ENCODE measurements at regions of chr18 and their contacts with region 1.

Region 1: GRCh38 chr18:29874519-29875098 is 1167.9 kb downstream of the DSC3 start:
- DNase-seq: no peak
- ATAC-seq: no peak
- H3K4me3 ChIP-seq: no peak overlapping the region
- H3K27ac ChIP-seq: no peak overlapping the region
- H3K4me1 ChIP-seq: no peaks in the 10 kb centered on the region
- H3K27me3 ChIP-seq: no peaks in the 10 kb centered on the region
- CTCF ChIP-seq: peak in 8 of 12 donors; percentile 19 to 46 (median 30)
- POLR2A ChIP-seq: no peak

Region 2: GRCh38 chr18:30271716-30272115 is 397.1 kb after region 1 on chr18:
- intact Hi-C with region 1: loop called in 1 of 10 experiments (anchors 10 kb)
- DNase-seq: no peak
- ATAC-seq: no peak
- H3K4me3 ChIP-seq: no peak overlapping the region
- H3K27ac ChIP-seq: no peak overlapping the region
- H3K4me1 ChIP-seq: no peaks in the 10 kb centered on the region
- H3K27me3 ChIP-seq: no peaks in the 10 kb centered on the region
- CTCF ChIP-seq: no peak
- POLR2A ChIP-seq: no peak

Region 3: GRCh38 chr18:30280880-30281470 is 406.4 kb after region 1 on chr18:
- intact Hi-C with region 1: loop called in 4 of 10 experiments (anchors 5 to 10 kb)
- DNase-seq: no peak
- ATAC-seq: no peak
- H3K4me3 ChIP-seq: no peak overlapping the region
- H3K27ac ChIP-seq: no peak overlapping the region
- H3K4me1 ChIP-seq: no peaks in the 10 kb centered on the region
- H3K27me3 ChIP-seq: no peaks in the 10 kb centered on the region
- CTCF ChIP-seq: peak; percentile 32 to 65 (median 51)
- POLR2A ChIP-seq: no peak

Region 4: DNA sequence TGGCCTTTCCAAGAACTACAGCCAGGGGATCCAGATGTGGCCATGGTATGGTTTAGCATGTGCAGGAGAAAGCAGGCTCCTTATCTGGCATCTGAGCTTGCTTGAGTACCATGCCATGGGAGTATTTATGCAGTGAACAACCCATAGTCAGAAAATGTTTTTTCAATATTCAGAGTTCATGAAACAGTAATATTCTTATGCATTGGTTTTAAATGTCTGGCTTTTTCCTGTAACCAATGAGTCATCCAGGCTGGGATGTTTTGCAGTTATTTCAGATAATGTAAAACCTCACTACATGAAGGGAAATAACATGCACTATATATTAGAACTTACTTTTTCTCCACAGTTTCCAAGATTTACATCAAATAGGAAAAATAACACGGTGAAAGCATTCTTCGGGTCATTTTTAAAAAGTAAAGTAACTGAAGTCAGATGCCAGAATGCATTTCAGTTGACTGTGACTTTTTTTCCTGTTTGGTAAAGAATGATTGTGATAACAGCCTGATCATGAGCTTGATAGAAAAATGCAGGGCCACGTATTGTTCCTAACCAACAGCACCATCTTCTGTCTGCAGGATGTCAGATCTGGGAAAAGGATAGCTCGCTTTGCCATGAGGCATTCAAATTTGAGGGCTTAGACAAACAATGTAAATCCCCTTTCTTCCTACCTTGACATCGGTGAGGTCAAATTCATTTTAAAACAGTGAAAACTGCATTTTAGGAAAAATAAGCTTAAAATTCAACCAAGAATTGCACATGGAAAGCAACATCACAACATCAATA is 1015.1 kb after region 1 on chr18:
- intact Hi-C with region 1: loop called in 2 of 10 experiments (anchors 10 kb)
- DNase-seq: no peak
- ATAC-seq: no peak
- H3K4me3 ChIP-seq: no peak overlapping the region
- H3K27ac ChIP-seq: no peak overlapping the region
- H3K4me1 ChIP-seq: no peaks in the 10 kb centered on the region
- H3K27me3 ChIP-seq: no peaks in the 10 kb centered on the region
- CTCF ChIP-seq: peak in 10 of 12 donors; percentile 12 to 49 (median 36)
- POLR2A ChIP-seq: no peak